Esophagus muscularis mucosa (tissue), 4 donors: ENCODE measurements at regions of chr2 and their contacts with region 1.

Region 1: DNA sequence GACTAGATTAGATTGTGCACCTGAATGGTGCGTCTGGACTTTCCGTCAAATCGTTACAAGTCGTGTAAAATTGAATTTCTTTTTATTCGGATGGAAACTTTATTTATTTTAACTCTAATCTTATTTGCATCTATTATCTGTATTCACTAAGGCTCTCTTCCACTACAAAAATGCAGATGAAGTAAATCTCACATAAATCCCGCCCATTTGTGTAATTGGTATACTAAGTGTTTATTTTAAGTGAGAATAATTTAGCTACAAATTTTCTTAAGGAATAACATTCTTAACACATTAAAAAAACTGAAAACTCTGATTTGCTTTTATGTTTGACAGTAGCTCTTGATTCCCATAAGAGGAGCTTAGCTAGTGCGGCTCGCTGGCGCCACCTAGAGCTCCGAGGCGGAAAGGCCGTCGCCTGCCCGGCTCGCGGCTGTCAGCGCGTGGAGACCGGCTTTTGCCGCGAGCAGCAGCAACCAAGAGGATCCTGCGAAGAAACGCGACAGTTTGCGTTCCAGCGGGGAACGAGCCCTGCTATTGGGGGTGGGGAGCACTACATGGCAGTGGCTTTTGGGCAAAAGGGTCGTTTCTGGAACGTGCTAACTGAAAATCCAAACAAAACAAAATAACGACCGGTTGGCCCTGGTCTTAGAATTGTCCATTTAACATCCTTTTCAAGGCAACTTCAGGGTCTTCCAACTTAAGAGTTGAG is 6.7 kb downstream of the SP9 start:
- DNase-seq: no peak
- H3K4me3 ChIP-seq: peak overlapping the region in 3 of 4 donors; percentile 0 to 31 (median 7)
- H3K27ac ChIP-seq: no peak overlapping the region
- H3K4me1 ChIP-seq: peaks cover 43 to 58% (median 55%) of the 10 kb centered on the region in 4 donors
- H3K27me3 ChIP-seq: peaks cover 17 to 88% (median 83%) of the 10 kb centered on the region in 4 donors
- CTCF ChIP-seq: peak in 2 of 3 experiments; percentile 92 to 95
- EP300 ChIP-seq: no peak
- POLR2A ChIP-seq: no peak

Region 2: GRCh38 chr2:173402405-173402974 is 939.0 kb before region 1 on chr2:
- intact Hi-C with region 1: loop called (anchors 2 kb)
- DNase-seq: no peak
- H3K4me3 ChIP-seq: peak overlapping the region; percentile 17 to 26 (median 20)
- H3K27ac ChIP-seq: no peak overlapping the region
- H3K4me1 ChIP-seq: peaks cover 0 to 16% (median 14%) of the 10 kb centered on the region in 4 donors
- H3K27me3 ChIP-seq: peaks cover 0 to 66% (median 18%) of the 10 kb centered on the region in 4 donors
- CTCF ChIP-seq: peak; percentile 72 to 84 (median 84)
- EP300 ChIP-seq: no peak
- POLR2A ChIP-seq: no peak

Region 3: GRCh38 chr2:173884025-173884802 is 457.2 kb before region 1 on chr2:
- intact Hi-C with region 1: loop called (anchors 10 kb)
- DNase-seq: no peak
- H3K4me3 ChIP-seq: no peak overlapping the region
- H3K27ac ChIP-seq: no peak overlapping the region
- H3K4me1 ChIP-seq: peaks cover 0 to 6% (median 0%) of the 10 kb centered on the region in 4 donors
- H3K27me3 ChIP-seq: peaks cover 0 to 3% (median 0%) of the 10 kb centered on the region in 4 donors
- CTCF ChIP-seq: peak; percentile 60 to 72 (median 65)
- EP300 ChIP-seq: no peak
- POLR2A ChIP-seq: no peak

Region 4: DNA sequence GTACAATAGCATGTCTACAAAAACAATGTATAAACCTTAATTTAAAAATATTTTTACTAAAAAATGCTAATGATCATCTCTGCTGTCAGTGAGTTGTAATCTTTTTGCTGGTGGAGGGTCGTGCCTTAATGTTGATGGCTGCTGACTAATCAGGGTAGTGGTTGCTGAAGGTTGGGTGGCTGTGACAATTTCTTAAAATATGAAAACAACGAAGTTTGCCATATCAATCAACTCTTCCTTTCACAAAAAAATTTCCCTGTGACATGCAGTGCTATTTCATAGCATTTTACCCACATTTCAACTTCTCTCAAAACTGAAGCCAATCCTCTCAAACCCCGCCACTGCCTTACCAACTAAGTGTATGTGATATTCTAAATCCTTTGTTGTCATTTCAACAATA is 205.5 kb before region 1 on chr2:
- intact Hi-C with region 1: no loop called
- DNase-seq: no peak
- H3K4me3 ChIP-seq: no peak overlapping the region
- H3K27ac ChIP-seq: no peak overlapping the region
- H3K4me1 ChIP-seq: no peaks in the 10 kb centered on the region
- H3K27me3 ChIP-seq: no peaks in the 10 kb centered on the region
- CTCF ChIP-seq: no peak
- EP300 ChIP-seq: no peak
- POLR2A ChIP-seq: no peak

Region 5: DNA sequence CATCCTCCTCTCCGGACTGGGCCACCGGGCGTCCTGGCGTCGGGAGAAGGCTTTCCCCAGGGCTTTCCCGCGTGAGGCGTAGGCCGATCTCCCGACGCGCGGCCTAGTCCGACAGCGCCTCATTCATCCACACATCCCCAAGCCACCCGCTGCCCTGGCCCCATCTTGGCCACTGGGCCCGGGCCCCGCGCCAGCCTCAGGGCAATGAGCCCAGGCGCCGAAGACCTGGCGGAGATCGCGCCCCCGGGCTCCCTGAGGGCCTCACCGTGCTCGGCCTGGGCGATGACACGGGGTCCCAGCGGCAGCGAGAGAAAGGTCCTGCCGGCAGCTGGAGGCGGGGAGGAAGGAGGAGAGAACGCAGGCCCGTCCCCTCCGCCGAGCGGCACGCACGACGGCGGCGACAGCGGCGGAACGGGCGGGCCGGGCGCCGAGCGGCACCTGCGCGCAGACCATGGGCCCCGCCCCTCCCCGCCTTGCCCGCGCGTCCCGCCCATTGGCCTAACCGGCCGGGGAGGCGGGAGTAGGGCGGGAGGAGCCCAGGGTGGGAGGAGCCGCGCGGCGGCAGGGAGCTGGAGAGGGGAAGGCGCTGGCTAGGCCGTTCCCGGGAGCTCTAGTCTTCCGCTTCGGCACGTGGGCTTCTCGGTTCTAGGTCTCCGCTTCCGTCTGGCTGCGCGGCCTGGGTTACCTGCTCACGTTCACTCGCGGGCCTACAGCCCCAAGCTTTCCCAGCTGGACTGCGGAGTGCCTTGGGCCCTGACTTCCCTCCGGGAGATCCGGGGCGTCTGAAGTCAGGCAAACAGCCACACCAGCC is 93.0 kb before region 1 on chr2 and contains the start of gene OLA1:
- intact Hi-C with region 1: loop called (anchors 5 kb)
- DNase-seq: peak; percentile 96
- H3K4me3 ChIP-seq: peak within 1 kb of the TSS; percentile 77 to 90 (median 82)
- H3K27ac ChIP-seq: peak within 1 kb of the TSS; percentile 82 to 88 (median 87)
- H3K4me1 ChIP-seq: peaks cover 10 to 30% (median 20%) of the 10 kb centered on the region in 4 donors
- H3K27me3 ChIP-seq: no peaks in the 10 kb centered on the region
- CTCF ChIP-seq: no peak
- EP300 ChIP-seq: no peak
- POLR2A ChIP-seq: peak; percentile 58
- total RNA-seq, gene OLA1: 54.2 to 62.7 (median 60.1) TPM

Region 6: DNA sequence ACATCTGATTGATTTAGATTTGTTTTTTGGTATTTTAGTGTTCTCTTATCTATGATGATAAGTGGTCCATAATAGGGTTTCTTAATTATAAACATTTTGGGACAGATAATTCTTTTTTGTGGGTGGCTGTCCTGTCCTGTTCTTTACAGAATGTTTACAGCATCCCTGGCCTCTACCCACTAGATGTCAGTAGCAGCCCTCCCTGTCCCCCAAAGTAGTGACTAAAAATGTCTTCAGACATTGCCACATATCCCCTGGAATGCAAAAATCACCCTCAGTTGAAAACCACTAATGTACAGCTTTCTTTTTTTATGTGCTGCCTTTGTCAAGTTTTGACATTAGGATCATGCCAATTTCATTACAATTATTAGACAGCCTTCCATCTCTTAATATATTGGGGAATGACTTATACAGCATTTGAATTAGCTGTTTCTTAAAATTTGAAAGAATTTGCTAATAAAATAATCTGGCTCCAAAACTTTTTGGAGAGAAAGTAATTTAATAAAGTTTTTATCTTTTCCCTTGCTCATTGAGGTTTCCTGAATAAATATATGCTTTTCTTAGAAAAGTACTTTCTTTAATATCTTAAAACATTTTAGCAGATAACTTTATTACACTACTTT is 236.6 kb after region 1 on chr2:
- intact Hi-C with region 1: no loop called
- DNase-seq: no peak
- H3K4me3 ChIP-seq: no peak overlapping the region
- H3K27ac ChIP-seq: no peak overlapping the region
- H3K4me1 ChIP-seq: peaks cover 0 to 35% (median 27%) of the 10 kb centered on the region in 4 donors
- H3K27me3 ChIP-seq: no peaks in the 10 kb centered on the region
- CTCF ChIP-seq: peak; percentile 31 to 47 (median 44)
- EP300 ChIP-seq: no peak
- POLR2A ChIP-seq: no peak

Region 7: GRCh38 chr2:174663550-174663949 is 322.1 kb after region 1 on chr2:
- intact Hi-C with region 1: no loop called
- DNase-seq: no peak
- H3K4me3 ChIP-seq: no peak overlapping the region
- H3K27ac ChIP-seq: peak overlapping the region; percentile 28 to 66 (median 60)
- H3K4me1 ChIP-seq: peaks cover 32 to 81% (median 65%) of the 10 kb centered on the region in 4 donors
- H3K27me3 ChIP-seq: no peaks in the 10 kb centered on the region
- CTCF ChIP-seq: no peak
- EP300 ChIP-seq: no peak
- POLR2A ChIP-seq: no peak

Region 8: DNA sequence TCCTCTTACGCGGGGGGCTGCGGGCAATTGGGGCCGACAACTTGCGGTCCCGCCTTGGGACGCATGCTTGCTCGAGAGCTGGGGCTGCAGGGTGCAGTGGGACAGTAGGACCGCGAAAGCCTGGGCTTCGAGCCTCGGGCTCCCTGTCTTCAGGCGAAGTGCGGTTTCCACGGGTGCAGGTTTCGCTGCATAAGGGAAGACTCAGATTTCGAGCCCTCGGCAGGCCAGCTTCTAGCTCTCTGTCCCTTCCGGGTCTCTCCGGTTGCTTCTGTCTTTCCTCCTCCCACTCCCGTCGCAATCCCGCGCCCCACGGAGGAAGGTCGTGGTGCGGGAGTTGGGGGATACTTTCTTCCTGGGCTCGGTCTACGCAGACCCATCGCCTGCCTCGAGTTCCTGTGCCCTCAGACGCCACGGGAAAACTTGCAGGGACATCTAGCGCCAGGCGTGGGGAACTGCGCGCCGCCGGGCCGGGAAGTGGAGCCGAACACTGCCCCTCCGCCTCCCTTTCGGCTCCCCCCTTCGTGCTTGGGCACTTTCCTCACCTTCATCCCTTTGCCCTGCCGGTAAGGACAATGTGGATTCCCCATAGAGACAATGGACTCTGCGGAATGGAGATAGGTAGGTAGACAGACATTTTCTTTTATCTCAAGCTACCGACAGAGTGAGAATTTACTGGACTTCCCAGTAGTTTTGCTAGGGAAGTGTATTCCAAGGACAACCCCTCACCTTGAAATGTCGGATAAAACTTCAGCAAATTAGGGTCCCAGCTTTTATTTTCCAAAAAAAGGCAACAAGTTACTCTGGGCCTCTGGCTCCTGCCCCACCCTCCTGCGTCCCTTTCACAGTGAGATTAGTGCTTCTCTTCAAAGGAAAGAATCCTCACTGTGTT is 1746.9 kb after region 1 on chr2:
- intact Hi-C with region 1: loop called (anchors 10 kb)
- DNase-seq: no peak
- H3K4me3 ChIP-seq: peak overlapping the region; percentile 24 to 52 (median 34)
- H3K27ac ChIP-seq: no peak overlapping the region
- H3K4me1 ChIP-seq: peaks cover 19 to 55% (median 53%) of the 10 kb centered on the region in 4 donors
- H3K27me3 ChIP-seq: peaks cover 8 to 100% (median 89%) of the 10 kb centered on the region in 4 donors
- CTCF ChIP-seq: peak; percentile 56 to 84 (median 60)
- EP300 ChIP-seq: no peak
- POLR2A ChIP-seq: no peak